ENCODE measurements at regions of chr9 and their contacts with region 1.

Region 1: DNA sequence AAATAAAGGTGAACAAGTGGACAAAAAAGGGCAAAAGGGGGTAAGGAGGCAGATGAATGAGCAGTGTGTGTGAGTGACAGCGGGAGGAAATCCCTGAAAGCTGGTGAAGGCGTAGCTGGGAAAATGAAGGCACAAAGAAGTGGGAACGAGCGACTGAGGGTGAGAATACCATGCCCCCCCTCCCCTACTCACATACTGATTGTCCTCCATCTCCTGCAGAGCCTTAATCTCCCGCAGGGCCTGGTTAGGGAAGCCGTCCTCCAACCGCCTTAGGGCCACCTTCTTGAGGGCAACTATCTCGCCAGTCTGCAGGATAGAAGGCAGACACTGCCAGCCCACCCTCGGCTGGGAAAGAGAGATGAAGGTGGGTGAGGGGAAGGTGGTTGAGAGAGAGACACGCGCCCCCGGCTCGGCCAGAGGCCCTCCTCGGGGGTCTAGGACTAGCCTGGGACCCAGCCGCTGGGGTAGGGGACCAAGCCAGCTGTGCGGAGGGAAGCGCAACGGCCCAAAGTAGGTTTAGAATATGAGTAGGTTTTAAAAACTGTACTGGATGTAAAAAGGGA is 522 bp downstream of the CDK20 start:
- DNase-seq: peak in 1 of 14 experiments; percentile 12
- ATAC-seq: no peak
- H3K4me3 ChIP-seq: peak overlapping the region; percentile 66
- H3K4me3 Mint-ChIP-seq: peak overlapping the region; percentile 93
- H3K27ac ChIP-seq: peak overlapping the region; percentile 75 to 90
- H3K27ac Mint-ChIP-seq: peak overlapping the region; percentile 96
- H3K4me1 ChIP-seq: peaks cover 17% of the 10 kb centered on the region
- H3K4me1 Mint-ChIP-seq: peaks cover 38% of the 10 kb centered on the region
- H3K27me3 ChIP-seq: no peaks in the 10 kb centered on the region
- H3K27me3 Mint-ChIP-seq: no peaks in the 10 kb centered on the region
- CTCF ChIP-seq: no peak

Region 2: GRCh38 chr9:87684627-87685219 is 289.1 kb before region 1 on chr9:
- CTCF ChIA-PET with region 1: no interaction called
- POLR2A ChIA-PET with region 1: interaction called, 4 read pairs
- intact Hi-C with region 1: loop called in 1 of 2 experiments (anchors 10 kb)
- DNase-seq: peak in 1 of 14 experiments; percentile 41
- ATAC-seq: no peak
- H3K4me3 ChIP-seq: no peak overlapping the region
- H3K4me3 Mint-ChIP-seq: no peak overlapping the region
- H3K27ac ChIP-seq: no peak overlapping the region
- H3K27ac Mint-ChIP-seq: peak overlapping the region; percentile 76
- H3K4me1 ChIP-seq: peaks cover 20% of the 10 kb centered on the region
- H3K4me1 Mint-ChIP-seq: peaks cover 29% of the 10 kb centered on the region
- H3K27me3 ChIP-seq: no peaks in the 10 kb centered on the region
- H3K27me3 Mint-ChIP-seq: no peaks in the 10 kb centered on the region
- CTCF ChIP-seq: peak; percentile 30

Region 3: GRCh38 chr9:87725900-87726709 is 247.7 kb before region 1 on chr9 and contains the start of gene CTSL:
- CTCF ChIA-PET with region 1: no interaction called
- POLR2A ChIA-PET with region 1: interaction called, 10 read pairs
- intact Hi-C with region 1: loop called in 1 of 2 experiments (anchors 5 kb)
- DNase-seq: peak; percentile 24 to 82 (median 62)
- ATAC-seq: peak; percentile 83
- H3K4me3 ChIP-seq: peak within 1 kb of the TSS; percentile 73
- H3K4me3 Mint-ChIP-seq: peak within 1 kb of the TSS; percentile 98
- H3K27ac ChIP-seq: peak within 1 kb of the TSS; percentile 25 to 52
- H3K27ac Mint-ChIP-seq: peak within 1 kb of the TSS; percentile 87
- H3K4me1 ChIP-seq: peaks cover 29% of the 10 kb centered on the region
- H3K4me1 Mint-ChIP-seq: peaks cover 59% of the 10 kb centered on the region
- H3K27me3 ChIP-seq: peaks cover 0 to 3% of the 10 kb centered on the region in 2 experiments
- H3K27me3 Mint-ChIP-seq: no peaks in the 10 kb centered on the region
- CTCF ChIP-seq: no peak
- total RNA-seq, gene CTSL: 7.5 to 7.9 TPM

Region 4: GRCh38 chr9:88090151-88090581 is 116.4 kb after region 1 on chr9:
- CTCF ChIA-PET with region 1: no interaction called
- POLR2A ChIA-PET with region 1: no interaction called
- intact Hi-C with region 1: no loop called
- DNase-seq: no peak
- ATAC-seq: no peak
- H3K4me3 ChIP-seq: no peak overlapping the region
- H3K4me3 Mint-ChIP-seq: no peak overlapping the region
- H3K27ac ChIP-seq: no peak overlapping the region
- H3K27ac Mint-ChIP-seq: no peak overlapping the region
- H3K4me1 ChIP-seq: no peaks in the 10 kb centered on the region
- H3K4me1 Mint-ChIP-seq: no peaks in the 10 kb centered on the region
- H3K27me3 ChIP-seq: no peaks in the 10 kb centered on the region
- H3K27me3 Mint-ChIP-seq: no peaks in the 10 kb centered on the region
- CTCF ChIP-seq: no peak

Region 5: DNA sequence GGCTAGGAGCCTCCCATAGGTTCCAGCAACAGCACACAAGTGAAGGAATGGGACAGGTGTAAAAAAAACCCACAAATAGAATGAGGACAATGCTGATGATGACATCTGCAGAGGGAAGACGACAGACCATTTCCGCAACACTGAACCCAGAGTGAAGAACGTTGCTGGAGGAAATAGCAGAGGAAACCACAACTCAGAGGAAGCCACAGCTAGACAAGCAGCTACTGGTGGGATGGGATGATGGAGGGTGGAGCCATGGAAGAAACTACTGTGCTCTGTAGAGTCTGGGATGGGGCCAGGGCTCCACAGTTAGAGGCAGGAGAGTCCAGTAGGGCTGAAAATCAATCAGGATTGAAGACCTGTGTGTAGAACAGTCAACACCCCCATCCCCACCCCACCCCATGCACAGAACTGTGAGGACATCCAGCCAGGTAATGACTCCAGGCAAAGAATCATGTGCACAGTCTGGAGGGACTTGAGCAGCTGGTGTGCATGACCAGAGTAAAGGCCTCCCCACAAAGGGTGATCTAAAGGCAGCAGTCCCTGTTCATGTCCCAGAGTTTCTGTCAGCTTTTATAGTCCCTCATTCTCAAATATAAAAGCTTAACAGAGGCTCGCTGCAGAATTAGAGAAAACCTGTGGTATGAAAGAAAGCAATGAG is 349.2 kb after region 1 on chr9:
- CTCF ChIA-PET with region 1: no interaction called
- POLR2A ChIA-PET with region 1: interaction called, 3 read pairs
- intact Hi-C with region 1: loop called in 1 of 2 experiments (anchors 1 kb)
- DNase-seq: peak; percentile 15 to 90 (median 42)
- ATAC-seq: peak; percentile 98
- H3K4me3 ChIP-seq: no peak overlapping the region
- H3K4me3 Mint-ChIP-seq: peak overlapping the region; percentile 30
- H3K27ac ChIP-seq: no peak overlapping the region
- H3K27ac Mint-ChIP-seq: peak overlapping the region; percentile 64
- H3K4me1 ChIP-seq: peaks cover 33% of the 10 kb centered on the region
- H3K4me1 Mint-ChIP-seq: peaks cover 32% of the 10 kb centered on the region
- H3K27me3 ChIP-seq: no peaks in the 10 kb centered on the region
- H3K27me3 Mint-ChIP-seq: no peaks in the 10 kb centered on the region
- CTCF ChIP-seq: no peak

Region 6: GRCh38 chr9:88388172-88388885 is 414.5 kb after region 1 on chr9 and contains the start of gene SPIN1:
- CTCF ChIA-PET with region 1: no interaction called
- POLR2A ChIA-PET with region 1: interaction called, 3 read pairs
- intact Hi-C with region 1: loop called (anchors 2 kb)
- DNase-seq: peak; percentile 69 to 94 (median 84)
- ATAC-seq: peak; percentile 69
- H3K4me3 ChIP-seq: peak within 1 kb of the TSS; percentile 79
- H3K4me3 Mint-ChIP-seq: peak within 1 kb of the TSS; percentile 98
- H3K27ac ChIP-seq: peak within 1 kb of the TSS; percentile 45 to 64
- H3K27ac Mint-ChIP-seq: peak within 1 kb of the TSS; percentile 100
- H3K4me1 ChIP-seq: peaks cover 15% of the 10 kb centered on the region
- H3K4me1 Mint-ChIP-seq: peaks cover 47% of the 10 kb centered on the region
- H3K27me3 ChIP-seq: no peaks in the 10 kb centered on the region
- H3K27me3 Mint-ChIP-seq: no peaks in the 10 kb centered on the region
- CTCF ChIP-seq: no peak
- total RNA-seq, gene SPIN1: 27.7 to 30.3 TPM

Region 7: DNA sequence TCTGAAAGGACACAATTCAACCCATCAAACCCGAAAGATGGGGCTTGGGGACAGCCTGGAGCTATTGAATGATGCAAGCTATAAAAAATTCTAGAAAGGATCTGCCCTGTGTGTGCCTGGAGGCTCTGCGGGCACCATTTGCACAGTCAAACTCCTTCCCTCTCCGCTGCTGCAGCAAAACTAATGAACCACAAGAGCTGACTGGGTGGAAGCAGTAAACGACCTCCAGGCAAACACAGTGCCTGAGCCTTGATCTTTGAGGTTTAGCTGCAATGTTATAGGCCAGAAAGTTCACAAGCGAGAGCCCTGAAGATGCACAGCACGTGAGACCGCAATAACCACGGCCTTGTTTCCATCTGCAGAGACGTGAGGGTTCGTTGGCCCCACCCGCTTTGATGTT is 948.2 kb after region 1 on chr9:
- CTCF ChIA-PET with region 1: no interaction called
- POLR2A ChIA-PET with region 1: no interaction called
- intact Hi-C with region 1: loop called in 1 of 2 experiments (anchors 10 kb)
- DNase-seq: peak; percentile 15 to 81 (median 36)
- ATAC-seq: peak; percentile 88
- H3K4me3 ChIP-seq: no peak overlapping the region
- H3K4me3 Mint-ChIP-seq: peak overlapping the region; percentile 75
- H3K27ac ChIP-seq: no peak overlapping the region
- H3K27ac Mint-ChIP-seq: peak overlapping the region; percentile 54
- H3K4me1 ChIP-seq: peaks cover 34% of the 10 kb centered on the region
- H3K4me1 Mint-ChIP-seq: peaks cover 61% of the 10 kb centered on the region
- H3K27me3 ChIP-seq: no peaks in the 10 kb centered on the region
- H3K27me3 Mint-ChIP-seq: no peaks in the 10 kb centered on the region
- CTCF ChIP-seq: no peak

Region 8: GRCh38 chr9:89969156-89969675 is 1995.4 kb after region 1 on chr9:
- CTCF ChIA-PET with region 1: no interaction called
- POLR2A ChIA-PET with region 1: no interaction called
- intact Hi-C with region 1: no loop called
- DNase-seq: no peak
- ATAC-seq: no peak
- H3K4me3 ChIP-seq: no peak overlapping the region
- H3K4me3 Mint-ChIP-seq: no peak overlapping the region
- H3K27ac ChIP-seq: no peak overlapping the region
- H3K27ac Mint-ChIP-seq: no peak overlapping the region
- H3K4me1 ChIP-seq: no peaks in the 10 kb centered on the region
- H3K4me1 Mint-ChIP-seq: no peaks in the 10 kb centered on the region
- H3K27me3 ChIP-seq: no peaks in the 10 kb centered on the region
- H3K27me3 Mint-ChIP-seq: no peaks in the 10 kb centered on the region
- CTCF ChIP-seq: no peak